Common myeloid progenitor, CD34-positive (primary cell): ENCODE measurements at regions of chr1 and their contacts with region 1.

Region 1: DNA sequence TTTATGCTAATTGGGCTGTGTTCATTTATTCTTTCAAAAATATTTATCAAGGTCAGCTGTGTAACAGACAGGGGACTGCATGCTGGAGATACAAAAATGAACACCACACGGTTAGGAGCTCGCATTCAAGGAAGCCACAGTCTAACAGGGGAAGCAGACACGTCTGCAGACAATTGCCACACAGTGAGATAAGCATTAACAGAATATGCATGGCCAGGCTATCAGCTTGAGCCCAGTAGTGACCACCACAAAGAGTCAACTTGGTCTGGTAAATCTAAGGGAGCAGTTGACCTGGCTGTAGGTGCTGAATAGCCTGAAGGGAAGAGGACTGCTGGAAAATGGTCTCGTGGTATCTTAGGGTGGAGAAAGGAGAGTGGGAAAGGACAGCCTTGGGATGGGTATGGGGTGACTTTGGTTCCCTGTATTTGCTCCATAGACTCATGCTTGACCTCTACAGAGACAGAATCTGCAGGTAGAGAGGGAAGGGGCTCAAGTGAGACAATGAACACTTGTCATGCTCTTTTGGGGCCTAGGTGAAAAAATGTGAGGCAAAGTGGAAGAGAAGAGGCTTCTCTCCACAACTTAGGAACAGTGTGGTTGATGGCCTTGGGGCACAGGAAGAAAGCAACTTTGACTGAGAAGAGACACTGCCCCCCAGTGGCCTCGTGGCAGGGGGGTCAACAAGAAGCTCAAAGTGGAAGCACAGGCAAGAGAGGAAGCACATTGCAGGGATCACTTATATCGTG is 7.6 kb upstream of the NPL start:
- DNase-seq: peak; percentile 73 to 82 (median 80)
- H3K4me3 ChIP-seq: no peak overlapping the region
- H3K27ac ChIP-seq: no peak overlapping the region
- H3K4me1 ChIP-seq: peaks cover 0 to 12% (median 5%) of the 10 kb centered on the region in 4 experiments
- H3K27me3 ChIP-seq: no peaks in the 10 kb centered on the region

Region 2: GRCh38 chr1:182588500-182589452 is 193.2 kb before region 1 on chr1 and contains the start of gene RNASEL:
- CTCF ChIA-PET with region 1: interaction called, 525 read pairs
- POLR2A ChIA-PET with region 1: no interaction called
- DNase-seq: peak; percentile 62 to 88 (median 81)
- H3K4me3 ChIP-seq: peak within 1 kb of the TSS; percentile 78 to 99 (median 96)
- H3K27ac ChIP-seq: peak within 1 kb of the TSS; percentile 86 to 95
- H3K4me1 ChIP-seq: peaks cover 0 to 19% (median 9%) of the 10 kb centered on the region in 4 experiments
- H3K27me3 ChIP-seq: no peaks in the 10 kb centered on the region

Region 3: DNA sequence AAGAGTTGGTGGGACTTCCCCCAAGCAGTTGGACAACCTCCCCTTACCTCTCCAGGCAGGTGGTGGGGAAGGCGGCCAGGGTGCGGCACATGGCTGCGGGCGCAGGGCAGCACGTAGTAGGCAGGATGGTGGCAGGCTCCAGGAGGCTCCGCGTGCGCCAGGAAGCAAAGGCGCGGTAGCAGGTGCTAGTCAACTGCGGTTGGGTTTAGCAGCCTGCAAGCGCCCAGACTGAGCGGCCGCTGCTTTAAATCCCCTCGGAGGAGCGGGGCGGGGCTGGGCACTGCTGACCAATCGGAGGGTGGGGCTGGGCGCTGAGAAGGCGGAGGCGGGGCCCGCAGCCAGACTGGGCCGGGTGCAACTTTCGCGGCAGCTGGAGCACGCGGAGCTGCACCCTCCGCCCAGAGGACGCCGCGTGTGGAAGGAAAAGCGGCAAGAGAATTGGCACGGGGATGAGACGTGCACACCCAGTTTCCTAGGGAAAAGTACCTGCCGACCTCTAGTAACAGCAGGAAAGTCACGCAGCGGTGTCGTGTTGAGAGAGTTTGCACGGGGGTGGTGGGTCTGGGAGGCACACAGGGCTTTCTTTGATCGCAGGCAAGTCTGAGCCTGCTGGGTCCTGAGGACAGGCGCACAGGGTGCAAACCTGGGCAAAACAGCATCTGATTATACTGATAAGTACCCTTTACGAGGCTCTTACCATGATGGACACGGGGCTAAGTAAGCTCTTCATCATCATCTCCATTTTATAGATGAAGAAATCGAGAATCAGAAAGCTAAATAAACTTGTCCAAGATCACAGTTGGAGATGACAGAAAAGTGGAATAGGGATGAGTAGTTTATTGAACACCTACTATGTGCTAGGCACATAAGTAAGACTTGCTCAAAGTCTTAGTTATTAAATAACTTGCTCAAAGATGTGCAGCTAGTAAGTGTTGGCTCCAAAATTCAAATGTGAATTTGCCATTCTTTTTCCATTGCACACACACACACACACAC is 177.5 kb before region 1 on chr1 and contains the start of gene RGS16:
- CTCF ChIA-PET with region 1: interaction called, 525 read pairs
- POLR2A ChIA-PET with region 1: interaction called, 4 read pairs
- DNase-seq: peak; percentile 63 to 84 (median 82)
- H3K4me3 ChIP-seq: peak within 1 kb of the TSS in 6 of 7 experiments; percentile 16 to 69 (median 41)
- H3K27ac ChIP-seq: no peak within 1 kb of the TSS
- H3K4me1 ChIP-seq: peaks cover 0 to 16% (median 11%) of the 10 kb centered on the region in 4 experiments
- H3K27me3 ChIP-seq: peaks cover 0 to 21% (median 13%) of the 10 kb centered on the region in 5 experiments

Region 4: DNA sequence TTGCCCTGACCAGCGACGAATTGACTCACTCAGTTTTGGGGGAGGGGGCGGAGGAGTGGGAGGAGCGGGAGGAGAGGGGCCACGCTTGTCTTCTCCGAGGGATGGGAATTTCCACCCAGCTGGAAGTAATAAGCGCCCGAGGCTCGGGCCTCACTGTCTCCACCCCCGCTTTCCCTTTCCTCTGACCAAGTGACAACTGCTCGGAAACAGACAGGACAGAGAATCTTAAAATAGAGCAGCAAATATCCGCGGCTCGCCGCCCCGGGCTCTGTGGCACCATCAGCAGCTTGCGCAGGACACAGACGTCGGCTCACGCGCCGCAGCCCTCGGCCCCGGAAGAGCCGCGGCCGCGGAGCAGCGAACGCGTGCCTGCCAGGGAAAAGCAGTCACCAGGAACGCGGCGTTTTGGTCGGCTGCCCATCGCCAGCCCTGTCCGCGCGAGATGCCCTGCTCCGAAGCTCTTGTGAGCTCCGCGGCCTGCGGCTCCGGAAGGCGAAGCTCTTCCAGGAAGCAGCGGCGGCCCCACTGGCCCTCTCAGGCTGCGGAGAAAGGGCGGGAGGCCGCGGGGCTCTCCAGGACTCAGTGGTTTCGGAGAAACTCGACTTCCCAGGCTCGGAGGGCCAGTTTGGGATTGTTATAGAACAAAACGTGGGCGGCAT is 167.1 kb before region 1 on chr1:
- CTCF ChIA-PET with region 1: interaction called, 40 read pairs
- POLR2A ChIA-PET with region 1: no interaction called
- DNase-seq: peak; percentile 38 to 68 (median 54)
- H3K4me3 ChIP-seq: peak overlapping the region; percentile 37 to 81 (median 61)
- H3K27ac ChIP-seq: no peak overlapping the region
- H3K4me1 ChIP-seq: peaks cover 8 to 33% (median 26%) of the 10 kb centered on the region in 4 experiments
- H3K27me3 ChIP-seq: peaks cover 3 to 36% (median 20%) of the 10 kb centered on the region in 5 experiments

Region 5: DNA sequence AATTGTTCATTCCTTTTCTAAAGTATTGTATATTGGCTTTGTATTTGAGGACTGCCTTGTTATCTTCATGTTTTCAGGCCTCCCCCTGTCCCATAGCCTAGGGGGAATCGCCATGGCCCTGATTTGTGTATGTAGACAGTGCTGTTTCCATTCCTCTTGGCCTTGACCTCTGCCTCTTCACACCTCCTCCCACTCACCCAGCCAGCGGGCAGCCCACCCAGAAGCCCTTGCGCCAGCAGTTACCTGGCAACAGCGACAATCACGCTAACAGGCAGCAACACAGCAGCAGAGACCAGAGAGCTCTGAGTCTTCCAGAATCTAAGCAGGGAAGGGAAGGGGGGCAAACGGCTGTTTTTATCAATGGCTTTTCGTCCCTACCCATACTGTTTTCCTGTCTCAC is 42.5 kb before region 1 on chr1:
- CTCF ChIA-PET with region 1: no interaction called
- POLR2A ChIA-PET with region 1: no interaction called
- DNase-seq: no peak
- H3K4me3 ChIP-seq: no peak overlapping the region
- H3K27ac ChIP-seq: no peak overlapping the region
- H3K4me1 ChIP-seq: no peaks in the 10 kb centered on the region
- H3K27me3 ChIP-seq: peaks cover 0 to 5% (median 0%) of the 10 kb centered on the region in 5 experiments

Region 6: DNA sequence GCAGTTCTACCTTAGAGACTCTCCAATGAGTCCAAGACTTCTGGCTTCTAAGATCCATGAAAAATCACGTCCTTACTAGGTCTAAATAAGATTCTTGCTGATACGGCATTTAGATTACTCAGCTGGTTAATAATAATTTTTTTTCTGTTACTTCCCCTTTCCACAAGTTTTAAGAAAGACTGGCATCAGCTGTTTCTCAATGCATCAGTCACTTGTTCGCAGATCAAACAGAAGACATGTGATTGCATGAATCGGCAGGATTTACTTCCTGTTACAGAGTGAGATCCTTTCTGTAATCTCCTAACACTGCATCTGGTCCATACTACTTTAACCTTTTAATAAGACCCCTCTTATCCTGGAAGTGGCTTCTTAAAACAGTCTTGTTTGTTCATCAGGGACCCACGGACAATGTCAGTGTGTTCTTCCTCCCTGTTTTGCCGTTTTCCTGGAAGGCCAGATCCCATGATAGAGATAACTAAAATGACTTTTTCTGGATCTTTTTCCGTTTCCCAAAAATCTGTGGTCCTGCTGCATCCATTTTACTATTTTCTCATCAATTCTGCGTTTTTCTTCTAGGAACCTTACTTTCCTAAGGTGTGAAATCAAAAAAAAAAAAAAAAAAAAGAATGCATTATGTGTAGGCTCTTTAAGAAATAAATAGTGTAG is 13.7 kb after region 1 on chr1:
- CTCF ChIA-PET with region 1: interaction called, 26 read pairs
- POLR2A ChIA-PET with region 1: no interaction called
- DNase-seq: peak; percentile 88 to 98 (median 95)
- H3K4me3 ChIP-seq: peak overlapping the region in 3 of 7 experiments; percentile 3 to 26 (median 8)
- H3K27ac ChIP-seq: peak overlapping the region in 1 of 2 experiments; percentile 6
- H3K4me1 ChIP-seq: peaks cover 10 to 17% (median 14%) of the 10 kb centered on the region in 4 experiments
- H3K27me3 ChIP-seq: no peaks in the 10 kb centered on the region

Region 7: DNA sequence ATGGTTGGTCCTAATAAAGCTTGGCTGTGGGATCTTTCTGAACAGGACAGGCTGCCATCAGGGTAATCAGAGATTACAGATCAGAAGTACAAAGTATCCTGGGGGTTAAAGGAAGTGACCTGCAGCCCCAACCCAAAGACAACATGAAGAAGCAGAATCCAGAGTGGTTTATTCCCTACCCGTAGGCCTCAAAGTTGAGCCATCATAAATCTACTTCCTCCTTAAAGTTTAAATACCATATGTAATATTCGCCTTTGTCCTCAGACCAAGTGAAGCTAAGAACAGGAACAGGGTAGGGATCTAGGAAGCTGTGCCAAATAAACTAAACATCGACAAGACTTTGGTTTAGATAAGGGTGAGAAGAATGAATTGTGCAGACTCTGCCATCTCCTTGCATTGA is 41.2 kb after region 1 on chr1:
- CTCF ChIA-PET with region 1: no interaction called
- POLR2A ChIA-PET with region 1: no interaction called
- DNase-seq: no peak
- H3K4me3 ChIP-seq: no peak overlapping the region
- H3K27ac ChIP-seq: no peak overlapping the region
- H3K4me1 ChIP-seq: no peaks in the 10 kb centered on the region
- H3K27me3 ChIP-seq: no peaks in the 10 kb centered on the region